ENCODE measurements at regions of chr7 and their contacts with region 1.

Region 1: DNA sequence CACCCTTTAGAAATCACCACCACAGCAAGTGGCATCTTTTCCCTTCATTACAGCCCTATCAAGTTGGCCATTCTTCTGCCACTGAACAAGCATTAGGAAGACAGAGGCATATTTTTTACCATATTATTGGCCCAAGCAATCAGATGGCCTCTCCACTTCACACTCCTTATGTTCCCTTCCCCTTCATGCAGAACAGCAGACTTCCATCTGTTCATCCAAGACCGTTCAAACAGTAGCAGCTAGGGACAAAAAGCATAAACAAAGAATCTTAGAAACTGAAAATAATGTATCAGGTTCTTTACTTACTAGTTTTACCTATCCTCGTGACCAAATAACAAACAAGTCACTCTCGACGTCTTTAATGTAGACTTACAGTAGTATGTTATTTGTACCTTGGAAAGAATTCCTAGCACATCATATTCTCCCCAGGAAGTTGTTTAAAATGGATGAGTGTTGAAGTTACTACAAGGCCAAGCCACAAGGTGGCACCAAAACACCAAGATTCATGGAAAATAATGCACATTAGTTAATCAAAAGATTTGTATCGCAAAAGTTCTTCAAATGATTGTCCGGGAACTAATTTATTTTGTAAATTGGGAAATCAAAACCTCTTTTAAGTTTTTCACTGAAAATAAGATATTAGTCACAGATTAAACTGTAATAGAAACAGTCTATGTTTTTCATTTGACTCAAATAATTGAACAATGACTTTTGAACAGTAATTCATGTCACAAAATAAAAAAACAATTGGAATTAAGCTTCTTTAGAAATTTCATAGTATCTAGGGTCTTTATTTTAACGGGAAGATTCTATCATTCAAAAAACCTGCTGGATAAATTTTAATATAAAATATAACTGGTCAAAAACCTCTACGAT is 112.1 kb downstream of the VPS41 start:
- DNase-seq: peak; percentile 50

Region 2: GRCh38 chr7:38550836-38551235 is 246.0 kb before region 1 on chr7:
- in situ Hi-C with region 1: no loop called
- DNase-seq: no peak

Region 3: GRCh38 chr7:39465055-39465929 is 668.4 kb after region 1 on chr7:
- in situ Hi-C with region 1: loop called (anchors 25 kb)
- DNase-seq: peak; percentile 43